ENCODE measurements at regions of chr3 and their contacts with region 1.

Region 1: GRCh38 chr3:130892759-130893375 is 1.0 kb upstream of the ATP2C1 start:
- DNase-seq: peak; percentile 57 to 64
- H3K4me3 ChIP-seq: peak overlapping the region; percentile 75
- H3K27ac ChIP-seq: peak overlapping the region; percentile 78
- H3K4me1 ChIP-seq: peaks cover 21% of the 10 kb centered on the region
- H3K27me3 ChIP-seq: no peaks in the 10 kb centered on the region
- CTCF ChIP-seq: peak; percentile 91

Region 2: DNA sequence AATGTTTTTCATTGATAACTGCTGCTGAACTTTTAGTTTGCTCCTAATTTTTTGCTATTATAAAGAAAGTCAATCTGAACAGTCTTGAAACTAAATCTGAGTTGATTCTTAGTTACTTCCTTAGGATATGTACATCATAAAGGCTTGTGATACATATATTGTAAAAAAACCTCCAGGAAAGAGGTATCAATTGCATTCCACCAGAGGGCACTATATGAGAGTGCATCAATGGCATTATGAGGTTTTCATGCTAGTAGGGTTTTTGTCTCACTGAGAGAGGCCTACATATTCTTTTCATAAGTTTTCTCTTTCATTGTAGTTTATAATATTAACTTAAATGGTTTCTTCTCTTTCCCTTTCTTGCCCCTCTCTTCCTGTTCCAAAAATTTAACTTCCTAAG is 193.1 kb before region 1 on chr3:
- CTCF ChIA-PET with region 1: interaction called, 3 read pairs
- POLR2A ChIA-PET with region 1: no interaction called
- intact Hi-C with region 1: loop called (anchors 1 kb)
- DNase-seq: peak in 1 of 2 experiments; percentile 42
- H3K4me3 ChIP-seq: no peak overlapping the region
- H3K27ac ChIP-seq: no peak overlapping the region
- H3K4me1 ChIP-seq: no peaks in the 10 kb centered on the region
- H3K27me3 ChIP-seq: no peaks in the 10 kb centered on the region
- CTCF ChIP-seq: peak; percentile 60

Region 3: GRCh38 chr3:130746246-130747039 is 146.4 kb before region 1 on chr3 and contains the start of gene PIK3R4:
- CTCF ChIA-PET with region 1: interaction called, 5 read pairs
- POLR2A ChIA-PET with region 1: interaction called, 21 read pairs
- intact Hi-C with region 1: no loop called
- DNase-seq: peak; percentile 93 to 94
- H3K4me3 ChIP-seq: peak within 1 kb of the TSS; percentile 91
- H3K27ac ChIP-seq: peak within 1 kb of the TSS; percentile 45
- H3K4me1 ChIP-seq: peaks cover 9% of the 10 kb centered on the region; the same call in 1 of the 2 replicates
- H3K27me3 ChIP-seq: no peaks in the 10 kb centered on the region
- CTCF ChIP-seq: no peak
- total RNA-seq, gene PIK3R4: 28.7 and 35.2 TPM in 2 replicates

Region 4: GRCh38 chr3:130759699-130760338 is 133.0 kb before region 1 on chr3:
- CTCF ChIA-PET with region 1: interaction called, 17 read pairs
- POLR2A ChIA-PET with region 1: interaction called, 4 read pairs
- intact Hi-C with region 1: loop called (anchors 1 kb)
- DNase-seq: peak; percentile 52 to 61
- H3K4me3 ChIP-seq: no peak overlapping the region
- H3K27ac ChIP-seq: no peak overlapping the region
- H3K4me1 ChIP-seq: peaks cover 31% of the 10 kb centered on the region
- H3K27me3 ChIP-seq: no peaks in the 10 kb centered on the region
- CTCF ChIP-seq: peak; percentile 83

Region 5: DNA sequence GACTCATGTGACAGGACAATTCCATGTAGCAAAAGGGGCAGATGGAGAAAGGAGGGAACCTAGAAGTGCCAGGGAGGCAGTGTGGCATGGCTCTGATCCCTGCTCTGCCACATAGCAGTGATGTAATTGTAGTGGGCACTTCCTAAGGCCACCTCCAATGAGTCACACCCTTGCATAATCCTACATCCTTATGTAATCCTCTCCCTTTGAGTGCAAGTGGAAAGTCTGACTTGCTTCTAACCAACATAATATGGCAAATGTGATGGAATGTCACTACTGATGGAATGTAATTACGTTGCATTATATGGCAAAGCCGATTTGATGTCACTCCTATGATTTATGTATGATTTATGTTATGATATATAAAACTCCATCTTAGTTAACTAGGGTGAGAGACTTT is 71.9 kb before region 1 on chr3:
- CTCF ChIA-PET with region 1: no interaction called
- POLR2A ChIA-PET with region 1: no interaction called
- intact Hi-C with region 1: loop called (anchors 2 kb)
- DNase-seq: peak; percentile 46 to 87
- H3K4me3 ChIP-seq: no peak overlapping the region
- H3K27ac ChIP-seq: peak overlapping the region; percentile 45
- H3K4me1 ChIP-seq: peaks cover 10% of the 10 kb centered on the region
- H3K27me3 ChIP-seq: no peaks in the 10 kb centered on the region
- CTCF ChIP-seq: no peak

Region 6: GRCh38 chr3:130950641-130951040 is 57.8 kb after region 1 on chr3:
- CTCF ChIA-PET with region 1: no interaction called
- POLR2A ChIA-PET with region 1: no interaction called
- intact Hi-C with region 1: loop called (anchors 5 kb)
- DNase-seq: no peak
- H3K4me3 ChIP-seq: no peak overlapping the region
- H3K27ac ChIP-seq: no peak overlapping the region
- H3K4me1 ChIP-seq: no peaks in the 10 kb centered on the region
- H3K27me3 ChIP-seq: no peaks in the 10 kb centered on the region
- CTCF ChIP-seq: no peak

Measured in PC-9 (cell line).